PC-3 (cell line): ENCODE measurements at regions of chr15 and their contacts with region 1.

Region 1: GRCh38 chr15:89171136-89172072 is 50.0 kb downstream of the RLBP1 start:
- DNase-seq: peak; percentile 77
- ATAC-seq: no peak
- H3K4me3 ChIP-seq: no peak overlapping the region
- H3K27ac ChIP-seq: no peak overlapping the region
- H3K4me1 ChIP-seq: peaks cover 29% of the 10 kb centered on the region
- H3K27me3 ChIP-seq: no peaks in the 10 kb centered on the region
- CTCF ChIP-seq: peak; percentile 90

Region 2: GRCh38 chr15:89129123-89129815 is 42.1 kb before region 1 on chr15:
- CTCF ChIA-PET with region 1: no interaction called
- POLR2A ChIA-PET with region 1: no interaction called
- intact Hi-C with region 1: loop called (anchors 2 kb)
- DNase-seq: peak; percentile 40
- ATAC-seq: peak; percentile 22; the same call in 1 of the 2 replicates
- H3K4me3 ChIP-seq: no peak overlapping the region
- H3K27ac ChIP-seq: peak overlapping the region; percentile 35
- H3K4me1 ChIP-seq: peaks cover 41% of the 10 kb centered on the region
- H3K27me3 ChIP-seq: no peaks in the 10 kb centered on the region
- CTCF ChIP-seq: peak; percentile 92

Region 3: DNA sequence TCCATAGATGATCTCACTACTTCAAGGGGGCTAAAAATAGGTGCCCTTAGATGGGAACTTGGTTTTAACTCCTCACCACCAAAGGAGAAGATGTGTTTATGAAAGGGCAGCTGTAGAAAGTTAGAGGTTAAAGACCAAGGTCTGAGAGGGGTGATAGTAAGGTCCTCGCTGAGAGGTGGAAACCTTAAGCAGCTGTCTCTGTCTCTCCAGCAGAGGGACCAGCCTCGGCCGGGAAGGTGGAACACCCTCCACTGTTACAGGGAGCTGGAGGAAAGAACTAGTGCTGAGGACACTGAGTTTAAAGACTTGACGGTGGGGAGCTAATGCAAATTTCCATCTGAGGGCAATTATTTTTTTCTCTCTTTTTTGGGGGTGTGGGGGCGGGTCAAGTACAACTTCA is 58.9 kb after region 1 on chr15:
- CTCF ChIA-PET with region 1: no interaction called
- POLR2A ChIA-PET with region 1: no interaction called
- intact Hi-C with region 1: no loop called
- DNase-seq: no peak
- ATAC-seq: peak; percentile 64; the same call in 1 of the 2 replicates
- H3K4me3 ChIP-seq: no peak overlapping the region
- H3K27ac ChIP-seq: peak overlapping the region; percentile 53
- H3K4me1 ChIP-seq: peaks cover 13% of the 10 kb centered on the region
- H3K27me3 ChIP-seq: no peaks in the 10 kb centered on the region
- CTCF ChIP-seq: no peak; the same call in 1 of the 2 replicates